T-cell (primary cell): ENCODE measurements at regions of chr1 and their contacts with region 1.

Region 1: GRCh38 chr1:8431019-8431418 is 113.1 kb downstream of the SLC45A1 start:
- DNase-seq: peak in 31 of 35 experiments; percentile 12 to 65 (median 40)
- ATAC-seq: peak; percentile 77 to 82 (median 78)
- H3K4me3 ChIP-seq: peak overlapping the region in 1 of 2 donors; percentile 4
- H3K4me3 Mint-ChIP-seq: peak overlapping the region in 2 of 3 donors; percentile 37 to 67
- H3K27ac ChIP-seq: peak overlapping the region; percentile 32
- H3K27ac Mint-ChIP-seq: peak overlapping the region; percentile 83 to 94
- H3K4me1 ChIP-seq: peaks cover 30 to 49% of the 10 kb centered on the region in 2 experiments
- H3K4me1 Mint-ChIP-seq: peaks cover 62 to 77% (median 66%) of the 10 kb centered on the region in 3 donors
- H3K27me3 ChIP-seq: no peaks in the 10 kb centered on the region
- H3K27me3 Mint-ChIP-seq: no peaks in the 10 kb centered on the region

Region 2: GRCh38 chr1:8409106-8409505 is 21.9 kb before region 1 on chr1:
- CTCF ChIA-PET with region 1: interaction called in 1 of 2 experiments, 19 read pairs
- POLR2A ChIA-PET with region 1: no interaction called
- DNase-seq: peak in 3 of 35 experiments; percentile 6 to 56 (median 12)
- ATAC-seq: peak; percentile 47 to 80 (median 61)
- H3K4me3 ChIP-seq: no peak overlapping the region
- H3K4me3 Mint-ChIP-seq: peak overlapping the region; percentile 43 to 71 (median 47)
- H3K27ac ChIP-seq: peak overlapping the region; percentile 11
- H3K27ac Mint-ChIP-seq: peak overlapping the region; percentile 59 to 76
- H3K4me1 ChIP-seq: peaks cover 28 to 56% of the 10 kb centered on the region in 2 experiments
- H3K4me1 Mint-ChIP-seq: peaks cover 51 to 86% (median 81%) of the 10 kb centered on the region in 3 donors
- H3K27me3 ChIP-seq: no peaks in the 10 kb centered on the region
- H3K27me3 Mint-ChIP-seq: no peaks in the 10 kb centered on the region

Region 3: DNA sequence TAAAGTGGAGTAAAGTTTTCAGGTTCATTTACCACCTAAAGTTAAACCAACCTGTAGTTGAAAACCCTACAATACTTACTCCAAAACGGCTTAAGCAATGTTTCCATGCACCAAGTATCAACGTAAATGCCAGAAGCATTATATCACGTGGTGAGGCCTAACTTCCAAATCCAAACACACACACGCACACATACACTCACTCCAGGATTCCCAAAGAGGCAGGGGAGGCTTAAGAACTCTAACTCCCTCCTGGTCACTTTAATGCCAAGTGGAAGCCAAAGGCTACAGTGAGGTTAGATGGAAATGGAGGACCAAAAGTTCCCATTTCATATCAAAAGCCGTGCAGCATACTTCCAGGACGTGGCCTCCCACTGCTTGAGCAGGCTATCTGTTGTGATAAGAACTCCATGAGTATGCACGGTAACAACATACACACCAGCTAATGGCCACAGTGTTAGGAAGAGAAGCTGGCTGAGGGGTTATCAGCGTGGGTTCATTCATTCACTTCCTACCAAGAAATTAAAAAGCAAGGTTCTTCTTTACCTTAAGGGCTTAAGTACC is 111.0 kb after region 1 on chr1:
- CTCF ChIA-PET with region 1: no interaction called
- POLR2A ChIA-PET with region 1: interaction called in 1 of 2 experiments, 22 read pairs
- DNase-seq: no peak
- ATAC-seq: no peak
- H3K4me3 ChIP-seq: no peak overlapping the region
- H3K4me3 Mint-ChIP-seq: no peak overlapping the region
- H3K27ac ChIP-seq: no peak overlapping the region
- H3K27ac Mint-ChIP-seq: no peak overlapping the region
- H3K4me1 ChIP-seq: peaks cover 0 to 2% of the 10 kb centered on the region in 2 experiments
- H3K4me1 Mint-ChIP-seq: peaks cover 13 to 33% (median 22%) of the 10 kb centered on the region in 3 donors
- H3K27me3 ChIP-seq: no peaks in the 10 kb centered on the region
- H3K27me3 Mint-ChIP-seq: no peaks in the 10 kb centered on the region